ENCODE measurements at regions of chr1 and their contacts with region 1.

Region 1: DNA sequence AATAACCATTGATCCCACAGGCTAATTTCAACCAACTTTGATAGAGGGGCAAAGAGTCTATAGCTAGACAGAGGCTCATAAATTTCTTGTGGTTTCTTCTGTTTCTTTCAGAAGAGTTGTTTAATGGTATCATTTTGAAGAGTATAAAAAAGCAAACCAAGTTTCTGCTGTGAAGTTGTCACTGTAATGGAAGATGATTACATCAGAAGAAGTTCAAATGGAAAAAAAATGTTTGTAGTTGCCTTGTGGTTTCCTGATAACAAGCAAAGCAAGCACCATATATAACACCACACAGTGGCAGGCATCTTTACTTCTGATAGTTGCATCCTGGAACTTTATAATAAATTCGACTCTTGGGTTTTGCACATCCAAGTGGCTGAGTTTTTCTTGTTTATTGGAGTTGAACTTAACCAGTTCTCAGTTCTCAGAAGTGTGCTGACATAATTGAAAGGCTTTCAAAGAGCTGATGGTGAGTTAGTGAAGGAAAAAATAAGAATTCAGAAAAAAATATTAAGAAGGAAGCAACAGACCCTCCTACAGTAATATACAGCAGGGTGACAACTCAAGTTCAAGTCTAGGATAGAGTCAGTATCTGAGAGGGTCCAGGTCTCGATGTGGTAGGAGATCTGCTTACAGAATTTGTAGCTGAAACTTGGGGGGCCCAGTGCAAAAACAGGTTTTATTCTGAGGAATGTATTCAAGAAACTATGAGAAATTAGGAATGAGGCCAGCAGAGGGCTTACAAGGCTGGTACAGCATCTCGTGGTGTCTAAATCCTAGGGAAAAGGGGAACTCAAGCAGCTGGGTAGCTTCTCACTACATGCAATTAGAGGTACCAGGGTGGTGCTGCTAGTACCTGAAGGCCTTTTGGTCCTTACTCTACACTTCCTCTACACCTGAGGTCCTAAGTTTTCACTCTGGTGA is 123.5 kb downstream of the CRB1 start:
- DNase-seq: no peak

Region 2: GRCh38 chr1:197367627-197368026 is 23.9 kb before region 1 on chr1:
- intact Hi-C with region 1: loop called in 1 of 2 experiments (anchors 2 kb)
- DNase-seq: no peak